ENCODE measurements at regions of chr4 and their contacts with region 1.

Region 1: DNA sequence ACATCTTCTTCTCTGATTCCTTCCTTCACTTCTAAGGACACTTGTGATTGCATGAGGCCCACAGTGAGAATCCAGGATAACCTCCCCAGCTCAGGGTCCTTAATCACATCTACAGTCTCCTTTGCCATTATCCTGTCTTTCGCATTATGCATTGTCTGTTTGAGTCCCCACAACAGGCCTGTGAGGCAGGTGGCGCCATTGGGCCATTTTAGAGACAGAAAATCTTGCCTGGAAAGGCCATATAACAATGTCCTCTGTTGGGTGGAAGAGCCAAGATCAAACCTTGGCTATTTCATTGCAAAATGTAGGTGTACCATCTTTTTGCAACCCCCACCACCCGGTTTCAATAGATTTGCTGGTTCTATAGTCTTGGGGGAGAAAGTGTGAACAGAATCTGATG is 11.8 kb upstream of the DCUN1D4 start:
- DNase-seq: peak; percentile 67
- ATAC-seq: peak; percentile 96
- H3K4me3 Mint-ChIP-seq: no peak overlapping the region
- H3K27ac Mint-ChIP-seq: no peak overlapping the region
- H3K4me1 Mint-ChIP-seq: no peaks in the 10 kb centered on the region
- H3K27me3 Mint-ChIP-seq: peaks cover 19% of the 10 kb centered on the region
- CTCF ChIP-seq: peak; percentile 22; the same call in 1 of the 2 replicates

Region 2: DNA sequence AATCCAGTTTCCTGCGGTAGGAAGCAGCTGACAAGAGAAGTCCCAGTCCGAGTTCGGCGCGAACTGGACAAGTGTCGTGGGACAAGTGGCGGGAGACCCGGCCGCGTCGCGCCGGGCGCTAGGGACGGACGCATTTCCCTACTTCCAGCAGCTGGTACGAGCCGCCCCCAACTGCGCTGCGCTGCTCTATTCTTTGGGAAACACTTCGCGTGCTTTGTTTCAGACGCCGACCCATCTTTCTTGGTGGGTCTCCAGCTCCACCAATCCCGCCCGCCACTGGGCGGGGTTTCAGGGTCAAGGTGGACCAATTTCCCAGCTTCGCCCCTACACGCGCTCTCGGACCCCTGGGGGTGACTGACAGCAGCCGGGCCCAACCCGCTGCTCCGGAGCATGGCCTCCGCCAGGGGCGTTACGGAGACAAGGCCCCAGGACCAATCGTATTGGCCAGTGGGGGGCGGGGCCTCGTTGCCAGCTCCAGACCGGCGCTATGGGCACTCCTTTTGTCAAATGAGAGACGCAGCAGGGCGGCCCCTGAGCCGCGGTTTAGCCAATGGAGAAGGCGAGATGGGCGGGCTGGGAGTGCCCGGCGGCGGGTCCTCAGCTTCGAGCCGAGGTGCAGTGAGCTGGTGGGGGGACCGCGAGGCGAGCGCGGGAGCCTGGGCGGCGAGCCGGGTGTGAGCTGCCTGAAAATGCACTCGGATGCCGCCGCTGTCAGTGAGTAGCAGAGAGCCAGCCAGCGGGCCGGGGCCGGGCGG is 11.6 kb after region 1 on chr4 and contains the start of gene DCUN1D4:
- CTCF ChIA-PET with region 1: interaction called, 22 read pairs
- POLR2A ChIA-PET with region 1: interaction called, 6 read pairs
- DNase-seq: peak; percentile 100
- ATAC-seq: peak; percentile 93
- H3K4me3 Mint-ChIP-seq: peak within 1 kb of the TSS; percentile 89
- H3K27ac Mint-ChIP-seq: peak within 1 kb of the TSS; percentile 47; the same call in 1 of the 2 replicates
- H3K4me1 Mint-ChIP-seq: peaks cover 23% of the 10 kb centered on the region
- H3K27me3 Mint-ChIP-seq: peaks cover 40% of the 10 kb centered on the region
- CTCF ChIP-seq: no peak
- total RNA-seq, gene DCUN1D4: 33.3 to 36.2 TPM (median 34.3 TPM) in 3 replicates